Right cardiac atrium (tissue), 5 donors: ENCODE measurements at regions of chr5 and their contacts with region 1.

Region 1: GRCh38 chr5:145681686-145682085 is 153.5 kb downstream of the PRELID2 start:
- DNase-seq: peak in 2 of 3 donors; percentile 22 to 48
- ATAC-seq: peak; percentile 76 to 89
- H3K4me3 ChIP-seq: no peak overlapping the region
- H3K27ac ChIP-seq: no peak overlapping the region
- H3K4me1 ChIP-seq: no peaks in the 10 kb centered on the region
- H3K27me3 ChIP-seq: no peaks in the 10 kb centered on the region

Region 2: DNA sequence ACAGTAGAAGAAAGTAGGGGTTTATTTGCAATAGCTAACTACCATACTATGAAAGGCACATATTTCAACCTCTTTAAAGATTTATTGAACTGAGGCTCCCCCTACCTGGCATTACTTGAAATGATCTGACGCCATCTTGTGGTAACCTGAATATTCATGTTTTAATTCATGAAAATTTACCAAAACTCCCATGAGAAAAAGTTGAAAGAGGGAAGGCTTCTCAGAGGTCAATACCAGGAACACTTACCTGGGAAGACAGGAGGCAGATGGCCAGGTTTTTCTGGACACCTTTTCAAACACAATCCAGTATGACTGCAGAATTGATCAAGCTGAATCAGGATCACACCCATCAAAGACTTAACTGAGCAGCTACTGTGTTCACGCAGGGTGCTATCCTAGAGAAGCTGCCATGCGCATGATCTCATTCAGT is 144.1 kb after region 1 on chr5:
- intact Hi-C with region 1: loop called in 2 of 4 experiments (anchors 10 kb)
- DNase-seq: no peak
- ATAC-seq: no peak
- H3K4me3 ChIP-seq: no peak overlapping the region
- H3K27ac ChIP-seq: no peak overlapping the region
- H3K4me1 ChIP-seq: no peaks in the 10 kb centered on the region
- H3K27me3 ChIP-seq: no peaks in the 10 kb centered on the region